B cell (primary cell): ENCODE measurements at regions of chr9 and their contacts with region 1.

Region 1: GRCh38 chr9:137618105-137619067 is at the start of gene EHMT1:
- DNase-seq: peak; percentile 96
- ATAC-seq: peak; percentile 90
- H3K4me3 ChIP-seq: peak within 1 kb of the TSS; percentile 78 to 99 (median 84)
- H3K4me3 Mint-ChIP-seq: peak within 1 kb of the TSS; percentile 88
- H3K27ac ChIP-seq: peak within 1 kb of the TSS; percentile 89 to 94
- H3K27ac Mint-ChIP-seq: peak within 1 kb of the TSS; percentile 93
- H3K4me1 ChIP-seq: peaks cover 25 to 37% of the 10 kb centered on the region in 2 donors
- H3K4me1 Mint-ChIP-seq: peaks cover 40% of the 10 kb centered on the region
- H3K27me3 ChIP-seq: no peaks in the 10 kb centered on the region
- H3K27me3 Mint-ChIP-seq: no peaks in the 10 kb centered on the region
- CTCF ChIP-seq: no peak
- total RNA-seq, gene EHMT1: 394 and 411 TPM in 2 replicates

Region 2: DNA sequence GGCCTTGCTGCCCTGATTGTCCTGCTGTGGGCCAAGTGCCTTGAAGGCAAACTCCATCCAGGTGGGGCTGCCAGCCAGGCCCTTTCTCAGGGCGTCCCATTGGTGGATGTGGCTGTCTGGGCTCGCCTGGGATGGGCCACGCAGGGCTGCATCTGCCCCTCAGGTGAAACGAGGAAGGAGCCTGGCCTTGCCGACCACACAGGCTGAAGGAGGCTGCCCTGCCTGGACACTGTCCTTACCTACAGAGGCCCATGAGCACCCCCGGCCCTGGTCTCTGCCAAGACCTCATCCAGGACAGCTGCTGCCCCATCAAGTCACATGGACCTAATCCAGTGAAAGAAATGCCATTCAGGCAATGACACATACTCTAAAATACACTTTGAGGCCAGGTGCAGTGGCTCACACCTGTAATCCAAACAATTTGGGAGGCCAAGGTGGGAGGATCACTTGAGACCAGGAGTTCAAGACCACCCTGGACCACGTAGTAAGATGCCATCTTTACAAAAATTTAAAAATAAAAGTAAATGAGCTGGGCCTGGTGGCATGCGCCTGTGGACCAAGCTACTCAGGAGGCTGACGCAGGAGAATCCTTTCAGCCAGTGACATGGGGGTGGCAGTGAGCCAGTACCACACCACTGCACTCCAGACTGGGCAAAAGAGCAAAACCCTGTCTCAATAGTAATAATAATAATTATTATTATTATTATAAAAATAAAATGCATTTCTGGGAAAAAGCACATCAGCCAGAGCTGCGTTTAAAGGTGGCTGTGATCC is 102.1 kb before region 1 on chr9:
- CTCF ChIA-PET with region 1: no interaction called
- POLR2A ChIA-PET with region 1: no interaction called
- intact Hi-C with region 1: no loop called
- DNase-seq: no peak
- ATAC-seq: no peak
- H3K4me3 ChIP-seq: no peak overlapping the region
- H3K4me3 Mint-ChIP-seq: no peak overlapping the region
- H3K27ac ChIP-seq: no peak overlapping the region
- H3K27ac Mint-ChIP-seq: no peak overlapping the region
- H3K4me1 ChIP-seq: no peaks in the 10 kb centered on the region
- H3K4me1 Mint-ChIP-seq: peaks cover 2% of the 10 kb centered on the region
- H3K27me3 ChIP-seq: no peaks in the 10 kb centered on the region
- H3K27me3 Mint-ChIP-seq: no peaks in the 10 kb centered on the region
- CTCF ChIP-seq: no peak

Region 3: DNA sequence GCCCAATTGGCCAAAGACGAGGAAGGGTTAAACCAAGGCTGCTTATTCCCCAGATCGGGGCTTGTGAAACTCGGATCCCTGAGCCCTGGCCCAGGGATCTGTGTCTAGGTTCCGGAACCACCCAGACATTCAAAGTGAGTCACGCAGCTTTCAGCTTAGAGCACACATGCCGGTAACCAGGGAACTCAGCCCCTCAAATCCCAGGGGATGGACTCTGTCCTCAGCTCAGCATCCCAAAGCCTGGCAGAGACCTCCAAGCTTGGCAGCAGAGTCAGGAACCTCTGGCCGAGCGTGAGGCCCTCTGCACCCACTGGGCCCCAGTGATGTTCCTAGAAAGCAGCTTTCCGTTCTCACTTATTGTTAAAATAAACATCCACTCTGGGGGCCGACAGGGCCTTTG is 73.3 kb before region 1 on chr9:
- CTCF ChIA-PET with region 1: no interaction called
- POLR2A ChIA-PET with region 1: no interaction called
- intact Hi-C with region 1: no loop called
- DNase-seq: no peak
- ATAC-seq: no peak
- H3K4me3 ChIP-seq: no peak overlapping the region
- H3K4me3 Mint-ChIP-seq: no peak overlapping the region
- H3K27ac ChIP-seq: no peak overlapping the region
- H3K27ac Mint-ChIP-seq: no peak overlapping the region
- H3K4me1 ChIP-seq: peaks cover 24 to 41% of the 10 kb centered on the region in 2 donors
- H3K4me1 Mint-ChIP-seq: peaks cover 30% of the 10 kb centered on the region
- H3K27me3 ChIP-seq: no peaks in the 10 kb centered on the region
- H3K27me3 Mint-ChIP-seq: no peaks in the 10 kb centered on the region
- CTCF ChIP-seq: no peak

Region 4: DNA sequence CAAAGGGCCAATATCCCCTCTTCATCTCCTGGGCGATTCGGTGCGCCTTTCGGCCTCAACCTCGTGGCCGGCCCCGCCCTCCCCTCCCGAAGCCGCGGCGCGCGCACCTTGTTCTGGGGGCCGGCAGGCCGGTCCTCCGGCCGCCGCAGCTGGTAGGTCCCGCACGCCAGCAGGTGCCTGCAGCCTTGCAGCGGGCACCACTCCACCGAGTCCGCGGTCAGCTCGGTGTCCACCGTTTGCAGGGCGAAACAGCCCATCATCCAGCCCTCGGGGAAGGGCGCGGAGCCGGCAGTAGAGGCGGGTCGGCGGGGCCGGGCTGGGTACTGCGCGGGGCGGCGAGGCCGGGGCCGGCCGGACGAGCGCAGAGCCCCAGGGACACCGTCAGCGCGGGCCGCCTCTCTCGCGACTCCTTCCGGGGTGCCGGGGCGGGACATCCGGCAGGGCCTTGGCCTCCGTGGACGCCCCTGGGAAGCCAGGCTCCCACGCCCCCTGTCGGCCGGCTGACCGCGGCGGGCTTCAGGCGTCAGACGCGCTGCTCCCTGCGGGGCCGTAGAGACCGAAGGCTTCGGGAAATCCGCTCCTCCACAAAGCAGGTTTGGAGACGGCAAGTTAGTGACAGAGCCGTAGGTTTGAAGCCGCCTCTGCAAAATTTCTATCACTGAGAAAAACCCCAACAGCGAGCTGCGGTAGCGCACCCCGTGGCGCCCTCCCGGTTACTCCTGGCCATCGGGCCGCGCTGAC is 39.7 kb before region 1 on chr9 and contains the start of gene DPH7:
- CTCF ChIA-PET with region 1: interaction called, 5 read pairs
- POLR2A ChIA-PET with region 1: interaction called, 3 read pairs
- intact Hi-C with region 1: loop called (anchors 1 kb)
- DNase-seq: peak; percentile 92
- ATAC-seq: peak; percentile 97
- H3K4me3 ChIP-seq: peak within 1 kb of the TSS in 4 of 5 experiments; percentile 63 to 92 (median 90)
- H3K4me3 Mint-ChIP-seq: peak within 1 kb of the TSS; percentile 80
- H3K27ac ChIP-seq: peak within 1 kb of the TSS in 1 of 2 donors; percentile 78
- H3K27ac Mint-ChIP-seq: peak within 1 kb of the TSS; percentile 26
- H3K4me1 ChIP-seq: peaks cover 18 to 30% of the 10 kb centered on the region in 2 donors
- H3K4me1 Mint-ChIP-seq: peaks cover 26% of the 10 kb centered on the region
- H3K27me3 ChIP-seq: no peaks in the 10 kb centered on the region
- H3K27me3 Mint-ChIP-seq: no peaks in the 10 kb centered on the region
- CTCF ChIP-seq: peak; percentile 94
- total RNA-seq, gene DPH7: 64.7 and 69.1 TPM in 2 replicates

Region 5: DNA sequence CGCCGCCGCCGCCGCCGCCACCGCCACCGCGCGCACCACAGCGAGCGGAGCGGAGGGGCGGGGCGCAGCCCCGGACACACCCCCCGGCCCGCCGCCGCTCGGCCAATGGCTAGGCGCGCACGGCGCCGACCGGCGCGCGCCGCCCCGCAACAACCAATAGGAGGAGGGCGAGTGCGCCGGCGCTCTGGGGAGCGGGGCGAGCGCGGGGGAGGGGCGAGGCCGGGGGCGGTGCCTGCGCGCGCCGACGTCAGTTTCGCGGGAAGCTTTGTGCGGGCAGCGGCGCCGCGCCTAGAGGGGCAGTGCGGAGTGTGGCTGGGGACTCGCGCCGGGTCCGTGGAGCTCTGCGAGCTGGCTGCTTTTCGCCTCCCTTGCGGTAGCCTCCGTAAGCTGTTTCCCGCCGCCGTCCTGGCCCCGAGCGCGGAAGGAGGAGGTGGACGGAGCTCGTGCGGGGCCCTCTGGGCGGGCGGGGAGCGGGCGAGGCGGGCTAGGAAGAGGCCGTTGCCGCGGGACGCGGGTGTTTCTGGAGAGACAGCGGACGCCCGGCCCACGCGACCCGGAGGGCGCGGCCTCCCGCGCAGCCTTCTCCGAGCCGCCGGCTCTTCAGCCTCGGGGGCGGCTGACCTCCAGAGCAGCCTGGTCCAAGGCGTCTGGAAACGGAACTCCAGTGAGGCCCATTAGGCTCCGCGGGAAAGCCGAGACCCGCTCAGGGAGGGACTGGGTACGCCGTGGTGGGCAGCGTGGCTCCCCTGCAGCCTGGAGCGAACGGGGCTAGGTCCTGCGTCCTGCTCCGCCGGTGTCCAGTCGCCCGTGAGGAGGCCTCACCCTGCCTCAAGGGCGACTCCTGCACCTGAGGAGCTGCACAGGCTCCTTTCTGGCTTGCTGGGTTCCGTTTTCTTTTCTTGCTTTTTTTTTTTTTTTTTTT is 27.7 kb before region 1 on chr9 and contains the start of gene ZMYND19:
- CTCF ChIA-PET with region 1: interaction called, 3 read pairs
- POLR2A ChIA-PET with region 1: interaction called, 8 read pairs
- intact Hi-C with region 1: loop called (anchors 1 kb)
- DNase-seq: peak; percentile 94
- ATAC-seq: peak; percentile 97
- H3K4me3 ChIP-seq: peak within 1 kb of the TSS; percentile 38 to 83 (median 80)
- H3K4me3 Mint-ChIP-seq: peak within 1 kb of the TSS; percentile 99
- H3K27ac ChIP-seq: peak within 1 kb of the TSS in 1 of 2 donors; percentile 66
- H3K27ac Mint-ChIP-seq: peak within 1 kb of the TSS; percentile 95
- H3K4me1 ChIP-seq: peaks cover 9 to 15% of the 10 kb centered on the region in 2 donors
- H3K4me1 Mint-ChIP-seq: peaks cover 12% of the 10 kb centered on the region
- H3K27me3 ChIP-seq: no peaks in the 10 kb centered on the region
- H3K27me3 Mint-ChIP-seq: no peaks in the 10 kb centered on the region
- CTCF ChIP-seq: no peak
- total RNA-seq, gene ZMYND19: 24.1 and 25.5 TPM in 2 replicates

Region 6: DNA sequence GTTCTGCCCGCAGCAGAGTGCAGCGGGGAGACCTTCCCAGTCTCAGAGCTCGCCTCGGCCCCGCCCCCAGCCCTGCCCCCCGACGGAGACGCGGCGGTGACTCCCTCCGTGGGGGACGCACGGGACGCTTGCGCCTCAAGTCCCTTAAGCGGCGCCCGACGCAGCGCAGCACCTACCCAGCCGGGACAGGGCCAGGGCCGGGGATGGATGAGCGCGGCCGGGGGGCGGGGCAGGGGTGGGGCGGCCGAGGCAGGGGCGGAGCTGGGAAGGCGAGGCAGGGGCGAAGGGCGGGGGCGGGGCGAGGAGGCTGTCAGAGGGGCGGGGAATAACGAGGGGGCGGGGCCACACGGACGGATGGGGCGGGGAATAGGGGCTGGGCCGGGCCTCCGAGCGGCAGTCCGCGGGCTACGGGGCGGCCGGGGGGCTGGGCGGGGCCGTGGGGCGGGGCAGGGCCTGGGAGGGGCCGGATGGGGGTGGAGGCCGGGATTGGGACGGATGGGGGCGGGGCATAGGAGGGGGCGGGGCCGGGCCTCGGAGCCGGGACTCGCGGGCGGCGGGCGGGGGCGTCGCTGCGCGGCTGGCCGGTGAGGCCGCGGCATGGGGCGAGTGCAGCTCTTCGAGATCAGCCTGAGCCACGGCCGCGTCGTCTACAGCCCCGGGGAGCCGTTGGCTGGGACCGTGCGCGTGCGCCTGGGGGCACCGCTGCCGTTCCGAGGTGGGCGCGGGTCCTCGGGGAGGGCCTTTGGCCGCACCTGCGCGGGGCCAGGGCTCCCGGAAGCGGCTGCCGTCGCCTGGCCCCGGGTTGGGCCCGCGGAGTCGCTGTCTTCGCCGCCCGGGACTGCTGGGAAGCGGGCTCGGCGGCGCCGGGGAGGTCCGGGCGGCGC is 13.0 kb before region 1 on chr9 and contains the start of gene ARRDC1:
- CTCF ChIA-PET with region 1: interaction called, 3 read pairs
- POLR2A ChIA-PET with region 1: interaction called, 5 read pairs
- intact Hi-C with region 1: loop called (anchors 1 kb)
- DNase-seq: peak; percentile 93
- ATAC-seq: peak; percentile 86
- H3K4me3 ChIP-seq: peak within 1 kb of the TSS; percentile 34 to 74 (median 60)
- H3K4me3 Mint-ChIP-seq: peak within 1 kb of the TSS; percentile 86
- H3K27ac ChIP-seq: peak within 1 kb of the TSS in 1 of 2 donors; percentile 61
- H3K27ac Mint-ChIP-seq: peak within 1 kb of the TSS; percentile 65
- H3K4me1 ChIP-seq: peaks cover 12 to 25% of the 10 kb centered on the region in 2 donors
- H3K4me1 Mint-ChIP-seq: peaks cover 21% of the 10 kb centered on the region
- H3K27me3 ChIP-seq: no peaks in the 10 kb centered on the region
- H3K27me3 Mint-ChIP-seq: no peaks in the 10 kb centered on the region
- CTCF ChIP-seq: no peak
- total RNA-seq, gene ARRDC1: 89.2 and 96.6 TPM in 2 replicates

Region 7: DNA sequence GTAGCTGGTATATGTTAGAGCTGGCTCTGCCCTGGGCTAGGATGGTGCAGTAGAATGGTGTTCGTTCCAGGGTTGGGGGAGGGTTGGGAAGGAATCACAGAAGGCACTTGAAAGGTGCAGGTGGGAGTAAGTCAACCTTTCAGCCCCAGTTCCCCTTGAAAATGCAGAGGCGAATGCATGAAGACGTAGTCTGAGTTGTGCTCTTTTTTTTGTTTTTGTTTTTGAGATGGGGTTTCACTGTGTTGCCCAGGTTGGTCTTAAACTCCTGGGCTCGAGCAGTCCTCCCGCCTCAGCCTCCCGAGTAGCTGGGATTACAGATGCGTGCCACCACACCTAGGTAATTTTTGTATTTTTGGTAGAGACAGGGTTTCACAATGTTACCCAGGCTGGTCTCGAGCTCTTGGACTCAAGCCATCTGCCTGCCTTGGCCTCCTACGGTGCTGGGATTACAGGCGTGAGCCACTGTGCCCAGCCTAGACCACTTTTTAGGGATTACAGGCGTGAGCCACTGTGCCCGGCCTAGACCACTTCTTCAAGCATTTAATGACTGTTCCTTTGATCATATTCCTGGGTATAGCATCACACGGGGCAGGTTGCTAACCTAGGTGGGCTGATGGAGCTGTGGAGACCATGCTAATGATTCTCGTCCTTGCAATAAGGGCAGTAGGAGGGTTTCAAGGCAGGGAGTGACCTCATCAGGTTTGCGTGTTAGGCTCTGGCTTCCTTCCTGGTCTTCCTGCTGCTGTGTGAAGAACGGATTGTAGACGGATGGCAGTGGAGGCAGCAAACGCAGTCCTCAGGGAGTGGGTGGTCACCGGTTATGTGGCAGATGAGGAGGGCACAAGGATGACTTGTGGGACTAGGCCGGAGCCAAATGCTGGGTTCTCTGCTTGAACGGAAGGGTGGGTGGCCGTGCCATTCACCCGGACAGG is 14.1 kb after region 1 on chr9:
- CTCF ChIA-PET with region 1: interaction called, 3 read pairs
- POLR2A ChIA-PET with region 1: interaction called, 10 read pairs
- intact Hi-C with region 1: no loop called
- DNase-seq: no peak
- ATAC-seq: no peak
- H3K4me3 ChIP-seq: no peak overlapping the region
- H3K4me3 Mint-ChIP-seq: no peak overlapping the region
- H3K27ac ChIP-seq: peak overlapping the region in 1 of 2 donors; percentile 48
- H3K27ac Mint-ChIP-seq: peak overlapping the region; percentile 53
- H3K4me1 ChIP-seq: peaks cover 30 to 50% of the 10 kb centered on the region in 2 donors
- H3K4me1 Mint-ChIP-seq: peaks cover 55% of the 10 kb centered on the region
- H3K27me3 ChIP-seq: no peaks in the 10 kb centered on the region
- H3K27me3 Mint-ChIP-seq: no peaks in the 10 kb centered on the region
- CTCF ChIP-seq: no peak

Region 8: DNA sequence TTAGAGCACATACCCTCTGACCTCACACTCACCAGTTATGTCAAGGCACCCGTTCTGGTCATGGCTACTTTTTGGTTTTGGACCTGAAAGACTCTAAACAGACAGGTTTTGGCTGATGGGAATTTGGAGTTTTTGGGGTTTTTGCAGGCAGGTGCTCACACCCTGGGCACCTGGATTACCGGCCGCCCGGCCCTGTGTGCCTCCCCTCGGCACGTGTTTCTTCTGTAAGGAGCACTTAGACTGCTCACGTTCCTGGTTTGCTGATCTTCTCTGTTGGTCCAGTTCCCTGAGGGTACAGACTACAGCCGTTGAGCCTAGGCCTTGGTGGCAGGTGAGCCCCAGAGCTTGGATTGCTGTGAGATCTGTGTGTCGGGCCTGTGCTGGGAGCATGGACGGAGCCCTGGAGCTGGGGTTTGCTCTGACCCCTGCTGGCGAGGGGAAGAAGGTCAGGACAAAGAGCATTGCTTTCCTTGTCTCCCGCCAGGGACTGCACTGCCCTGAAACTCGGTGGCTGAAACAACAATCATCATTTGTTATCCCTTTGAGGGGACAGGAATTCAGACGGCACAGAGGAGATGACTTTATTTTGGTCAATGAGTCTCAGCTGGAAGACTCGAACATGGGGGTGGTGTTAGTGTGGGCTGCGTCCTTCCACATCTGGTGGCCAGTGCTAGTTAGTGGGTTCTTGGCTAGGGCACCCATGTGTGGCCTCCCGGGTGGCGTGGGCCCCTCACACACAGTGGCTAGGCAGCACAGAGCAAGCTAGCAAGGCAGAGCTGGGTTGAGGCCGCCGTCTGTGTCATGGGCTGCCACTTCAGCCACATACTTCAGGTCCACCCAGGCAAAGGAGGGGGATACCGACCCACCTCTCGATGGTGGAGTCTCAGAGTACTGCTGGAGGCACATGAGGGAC is 76.8 kb after region 1 on chr9:
- CTCF ChIA-PET with region 1: interaction called, 4 read pairs
- POLR2A ChIA-PET with region 1: no interaction called
- intact Hi-C with region 1: loop called (anchors 2 kb)
- DNase-seq: peak; percentile 69
- ATAC-seq: peak; percentile 56
- H3K4me3 ChIP-seq: no peak overlapping the region
- H3K4me3 Mint-ChIP-seq: peak overlapping the region; percentile 49
- H3K27ac ChIP-seq: peak overlapping the region in 1 of 2 donors; percentile 23
- H3K27ac Mint-ChIP-seq: peak overlapping the region; percentile 86
- H3K4me1 ChIP-seq: peaks cover 37 to 43% of the 10 kb centered on the region in 2 donors
- H3K4me1 Mint-ChIP-seq: peaks cover 66% of the 10 kb centered on the region
- H3K27me3 ChIP-seq: no peaks in the 10 kb centered on the region
- H3K27me3 Mint-ChIP-seq: no peaks in the 10 kb centered on the region
- CTCF ChIP-seq: peak; percentile 72